ENCODE measurements at regions of chr21 and their contacts with region 1.

Region 1: GRCh38 chr21:30257773-30258172 is 25.0 kb downstream of the KRTAP24-1 start:
- DNase-seq: peak; percentile 77
- H3K4me3 Mint-ChIP-seq: no peak overlapping the region
- H3K27ac Mint-ChIP-seq: no peak overlapping the region
- H3K4me1 Mint-ChIP-seq: peaks cover 8% of the 10 kb centered on the region
- H3K27me3 Mint-ChIP-seq: no peaks in the 10 kb centered on the region
- CTCF ChIP-seq: peak; percentile 55

Region 2: DNA sequence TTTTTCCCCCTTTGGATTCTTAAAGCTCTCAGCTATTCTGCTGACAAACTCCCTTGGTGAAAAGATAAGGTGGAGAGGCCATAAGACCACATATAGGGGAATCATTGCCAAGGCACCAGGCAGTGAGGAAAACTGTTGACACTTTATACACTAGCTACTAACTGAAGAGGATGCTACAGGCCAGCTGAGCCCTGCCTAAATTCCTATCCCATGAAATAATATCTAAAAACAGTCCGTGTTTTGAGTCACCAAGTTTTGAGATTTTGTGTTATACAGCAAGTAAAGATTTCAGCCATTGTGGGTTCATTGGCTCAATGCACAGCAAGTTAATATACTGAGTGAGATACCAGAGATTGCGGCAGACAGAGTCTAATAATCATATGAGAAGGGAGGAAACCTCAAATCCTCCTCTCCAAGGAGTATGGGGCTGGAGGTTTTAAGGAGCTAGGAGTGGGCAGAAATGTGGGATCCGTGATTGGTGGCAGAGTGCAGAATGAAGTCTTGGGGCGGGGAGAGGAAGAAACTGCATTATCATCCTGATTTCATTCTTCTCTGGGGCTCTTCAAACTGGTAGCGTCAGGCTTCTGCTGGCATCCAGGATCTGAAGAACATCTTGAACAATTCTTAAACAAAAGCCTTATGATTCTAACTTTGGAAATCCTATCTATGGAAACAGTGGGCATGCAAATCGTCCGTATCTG is 51.1 kb before region 1 on chr21:
- CTCF ChIA-PET with region 1: interaction called, 3 read pairs
- POLR2A ChIA-PET with region 1: no interaction called
- intact Hi-C with region 1: loop called (anchors 1 kb)
- DNase-seq: peak; percentile 14
- H3K4me3 Mint-ChIP-seq: no peak overlapping the region
- H3K27ac Mint-ChIP-seq: peak overlapping the region; percentile 25
- H3K4me1 Mint-ChIP-seq: peaks cover 7% of the 10 kb centered on the region
- H3K27me3 Mint-ChIP-seq: no peaks in the 10 kb centered on the region
- CTCF ChIP-seq: no peak

Region 3: DNA sequence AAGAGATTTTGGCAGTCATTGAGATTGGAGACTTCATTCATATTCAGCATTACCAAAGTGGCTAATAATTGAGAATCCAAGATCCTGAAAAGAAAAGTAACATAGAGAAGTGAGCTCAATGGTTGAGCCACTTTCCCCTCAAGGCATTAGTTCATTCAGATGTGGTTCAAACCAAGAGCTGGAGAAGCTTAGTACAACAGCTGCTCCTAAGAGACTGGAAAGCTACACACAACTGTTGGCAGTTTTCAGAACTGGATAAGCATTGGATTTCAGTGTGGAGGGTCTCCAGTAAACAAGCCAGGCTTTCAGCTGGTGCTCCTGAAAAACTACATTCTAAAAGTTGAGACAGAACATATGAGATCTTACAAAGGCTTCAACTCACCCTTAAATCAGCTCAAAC is 12.7 kb before region 1 on chr21:
- CTCF ChIA-PET with region 1: interaction called, 14 read pairs
- POLR2A ChIA-PET with region 1: no interaction called
- intact Hi-C with region 1: no loop called
- DNase-seq: no peak
- H3K4me3 Mint-ChIP-seq: no peak overlapping the region
- H3K27ac Mint-ChIP-seq: no peak overlapping the region
- H3K4me1 Mint-ChIP-seq: no peaks in the 10 kb centered on the region
- H3K27me3 Mint-ChIP-seq: no peaks in the 10 kb centered on the region
- CTCF ChIP-seq: no peak